ENCODE measurements at regions of chrX and their contacts with region 1.

Region 1: DNA sequence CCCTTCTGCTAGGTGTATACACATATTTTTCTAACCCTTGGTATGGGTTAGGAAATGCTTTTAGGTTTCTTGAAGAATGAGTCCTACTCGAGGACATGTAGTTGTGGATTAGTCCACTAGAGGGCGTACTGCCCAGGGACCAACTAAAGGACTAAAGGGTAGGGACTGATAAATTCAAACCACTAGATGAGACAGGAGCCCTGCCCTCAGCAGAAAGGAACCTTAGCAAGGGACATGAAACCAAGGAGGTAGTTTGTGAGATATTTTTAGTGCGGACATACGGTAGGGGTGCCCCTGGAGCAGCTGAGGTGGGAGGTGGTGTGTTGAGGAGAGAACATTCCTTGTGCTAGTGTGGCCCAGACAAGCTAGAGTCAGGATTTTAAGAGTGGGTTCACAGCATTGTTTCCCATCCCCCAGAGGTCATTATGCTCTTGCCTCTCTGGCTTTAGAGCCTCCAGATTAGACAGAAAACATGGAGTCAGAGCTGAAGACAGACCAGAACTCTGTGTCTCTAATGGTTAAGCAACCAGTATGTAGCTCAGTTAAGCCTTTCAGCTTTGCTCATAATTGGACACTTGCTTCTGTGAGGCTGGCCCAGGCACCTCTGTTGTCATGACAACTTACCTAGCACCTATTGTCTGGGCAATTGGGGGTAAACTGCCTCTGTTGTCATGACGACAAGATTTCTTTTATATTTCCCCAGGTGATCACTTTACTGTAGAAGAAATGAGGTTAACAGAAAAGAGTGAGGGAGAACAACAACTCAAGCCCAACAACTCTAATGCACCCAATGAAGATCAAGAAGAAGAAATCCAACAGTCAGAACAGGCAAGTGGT is 1.0 kb downstream of the TMEM31 start:
- DNase-seq: peak in 1 of 2 donors; percentile 32
- H3K4me3 ChIP-seq: no peak overlapping the region
- CTCF ChIP-seq: peak in 1 of 3 donors; percentile 15
- POLR2A ChIP-seq: no peak

Region 2: GRCh38 chrX:103063918-103064434 is 647.8 kb before region 1 on chrX and contains the start of gene BEX1:
- intact Hi-C with region 1: no loop called
- DNase-seq: no peak
- H3K4me3 ChIP-seq: no peak within 1 kb of the TSS
- CTCF ChIP-seq: no peak
- POLR2A ChIP-seq: no peak
- total RNA-seq, gene BEX1: 1.1 TPM in 1 of 4 donors, not detected in the others

Region 3: DNA sequence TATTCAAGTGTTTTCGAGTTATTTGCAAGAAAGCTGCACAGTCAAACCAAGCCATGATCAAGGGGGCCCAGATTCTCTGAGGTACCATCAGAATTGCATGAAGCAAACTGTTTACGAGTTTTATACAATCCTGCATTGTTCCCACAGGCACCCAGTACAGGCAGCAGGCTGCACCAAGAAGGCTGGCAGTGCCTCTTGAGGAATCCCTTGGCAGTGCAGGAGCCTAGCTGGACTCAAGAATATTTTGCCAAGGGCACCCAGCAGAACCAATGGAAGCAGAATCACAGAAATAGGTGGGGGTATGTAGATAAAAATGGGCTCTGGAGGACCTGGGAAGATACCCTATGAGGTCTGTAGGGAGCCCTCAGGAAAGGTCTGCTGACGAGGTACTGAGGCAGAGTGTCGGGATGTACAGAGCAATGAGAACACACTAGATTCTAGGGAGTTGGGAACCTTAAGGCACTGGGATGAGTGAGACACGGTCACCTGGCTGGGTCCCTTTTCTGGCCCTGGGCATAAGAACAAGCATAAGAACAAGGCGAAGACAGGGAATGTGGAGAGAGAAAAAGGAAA is 62.4 kb after region 1 on chrX:
- intact Hi-C with region 1: loop called (anchors 10 kb)
- DNase-seq: peak in 1 of 2 donors; percentile 31
- H3K4me3 ChIP-seq: no peak overlapping the region
- CTCF ChIP-seq: no peak
- POLR2A ChIP-seq: no peak

Region 4: DNA sequence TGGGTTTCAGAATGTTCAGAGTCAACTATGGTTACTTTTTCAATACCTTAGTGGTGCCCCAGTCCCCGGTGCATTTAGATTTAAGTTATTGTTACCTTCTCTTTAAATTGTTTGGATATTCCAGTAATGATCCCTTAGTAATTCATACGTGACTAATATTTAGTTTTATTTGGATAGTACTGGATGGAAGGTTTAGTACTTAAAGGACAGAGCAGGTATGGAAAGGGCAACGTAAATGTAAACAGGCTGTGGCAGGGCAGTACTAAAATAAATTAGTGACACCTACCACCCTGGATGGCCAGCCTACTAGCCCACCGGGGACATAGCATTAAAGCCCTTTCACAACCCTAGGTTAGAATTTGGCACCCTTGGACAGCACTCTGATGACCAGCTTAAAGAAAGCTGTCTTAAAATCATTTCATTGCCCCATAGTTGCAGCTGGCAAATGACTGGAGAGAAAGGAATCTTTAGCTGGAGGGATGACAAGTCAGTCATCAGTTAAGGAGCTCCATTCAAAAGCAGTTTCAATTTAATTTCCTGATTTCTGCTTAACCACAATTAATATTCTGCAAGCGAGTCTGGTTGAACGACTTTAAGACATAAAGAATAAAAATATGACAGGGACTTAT is 81.3 kb after region 1 on chrX:
- intact Hi-C with region 1: no loop called
- DNase-seq: no peak
- H3K4me3 ChIP-seq: no peak overlapping the region
- CTCF ChIP-seq: no peak
- POLR2A ChIP-seq: no peak

Region 5: DNA sequence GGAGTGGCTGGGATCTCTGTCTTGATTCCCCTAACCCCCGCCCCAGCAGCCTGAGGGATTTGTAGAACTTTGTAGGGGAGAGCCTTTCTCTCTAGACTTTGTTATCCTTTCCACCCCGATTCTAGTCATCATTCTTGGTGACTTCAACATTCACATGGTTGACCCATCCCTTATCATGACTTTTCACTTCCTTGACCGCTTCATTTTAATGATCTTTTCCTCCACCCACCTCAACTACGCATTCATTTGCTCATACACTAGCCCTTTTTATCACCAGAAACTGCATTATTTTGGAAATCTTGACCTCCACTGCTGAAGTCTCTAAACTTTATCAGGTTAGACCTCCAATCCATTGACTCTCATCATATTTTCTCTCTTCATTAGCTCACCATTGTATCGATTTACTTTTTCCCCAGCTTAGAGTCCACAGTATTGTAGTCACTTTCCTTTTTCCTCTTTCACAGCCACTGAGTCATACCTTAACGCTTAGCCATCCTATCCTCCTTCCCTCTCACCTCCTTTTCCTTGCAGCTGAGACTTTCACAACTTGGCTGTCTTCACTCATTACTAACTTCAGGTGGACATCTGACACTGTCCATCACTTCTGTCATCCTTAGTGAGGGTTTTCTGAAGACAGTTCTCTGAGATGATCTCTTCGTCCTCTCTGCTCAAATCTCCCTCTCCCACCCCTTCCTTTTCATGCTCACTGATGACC is 613.3 kb after region 1 on chrX:
- intact Hi-C with region 1: no loop called
- DNase-seq: no peak
- H3K4me3 ChIP-seq: no peak overlapping the region
- CTCF ChIP-seq: no peak
- POLR2A ChIP-seq: no peak

Region 6: GRCh38 chrX:104659005-104659744 is 947.4 kb after region 1 on chrX:
- intact Hi-C with region 1: no loop called
- DNase-seq: no peak
- H3K4me3 ChIP-seq: no peak overlapping the region
- CTCF ChIP-seq: no peak
- POLR2A ChIP-seq: no peak